Ascending aorta (tissue), 2 donors: ENCODE measurements at regions of chr6 and their contacts with region 1.

Region 1: DNA sequence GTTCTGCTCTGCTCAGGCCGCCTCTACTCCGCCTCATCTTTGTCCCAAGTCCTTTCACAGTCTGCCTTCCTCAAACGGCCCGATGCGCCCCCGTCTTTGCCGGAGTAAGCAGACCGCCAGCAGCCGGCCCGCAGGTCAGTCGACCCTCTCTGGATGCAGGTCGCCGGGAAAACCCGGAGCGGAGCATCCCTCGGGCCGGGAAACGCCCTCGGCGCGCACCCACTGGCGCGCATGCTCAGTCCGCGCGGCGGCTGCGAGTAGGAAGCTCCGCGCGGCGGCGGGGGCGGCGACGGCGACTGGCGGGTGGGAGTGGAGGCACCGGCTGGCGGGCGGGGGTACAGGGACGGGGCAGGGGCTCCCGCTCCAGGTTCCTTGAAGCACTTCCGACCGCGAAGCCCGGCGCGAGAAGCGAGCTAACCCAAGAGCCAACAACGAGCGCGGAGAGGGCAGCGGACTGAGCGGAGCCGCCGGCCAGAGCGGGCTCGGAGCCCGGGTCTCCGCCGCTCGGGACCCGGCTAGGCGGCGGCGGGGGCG is at the start of gene LRRC1:
- DNase-seq: peak; percentile 59 to 96
- H3K4me3 ChIP-seq: peak within 1 kb of the TSS; percentile 84 to 93
- H3K27ac ChIP-seq: peak within 1 kb of the TSS; percentile 74 to 91
- H3K4me1 ChIP-seq: peaks cover 3 to 5% of the 10 kb centered on the region in 2 donors
- H3K27me3 ChIP-seq: no peaks in the 10 kb centered on the region
- CTCF ChIP-seq: no peak
- total RNA-seq, gene LRRC1: 16.3 TPM

Region 2: GRCh38 chr6:53359072-53359842 is 435.5 kb before region 1 on chr6:
- intact Hi-C with region 1: loop called (anchors 10 kb)
- DNase-seq: peak; percentile 87 to 98
- H3K4me3 ChIP-seq: peak overlapping the region; percentile 53 to 80
- H3K27ac ChIP-seq: peak overlapping the region; percentile 78 to 94
- H3K4me1 ChIP-seq: peaks cover 0 to 4% of the 10 kb centered on the region in 2 donors
- H3K27me3 ChIP-seq: no peaks in the 10 kb centered on the region
- CTCF ChIP-seq: no peak

Region 3: DNA sequence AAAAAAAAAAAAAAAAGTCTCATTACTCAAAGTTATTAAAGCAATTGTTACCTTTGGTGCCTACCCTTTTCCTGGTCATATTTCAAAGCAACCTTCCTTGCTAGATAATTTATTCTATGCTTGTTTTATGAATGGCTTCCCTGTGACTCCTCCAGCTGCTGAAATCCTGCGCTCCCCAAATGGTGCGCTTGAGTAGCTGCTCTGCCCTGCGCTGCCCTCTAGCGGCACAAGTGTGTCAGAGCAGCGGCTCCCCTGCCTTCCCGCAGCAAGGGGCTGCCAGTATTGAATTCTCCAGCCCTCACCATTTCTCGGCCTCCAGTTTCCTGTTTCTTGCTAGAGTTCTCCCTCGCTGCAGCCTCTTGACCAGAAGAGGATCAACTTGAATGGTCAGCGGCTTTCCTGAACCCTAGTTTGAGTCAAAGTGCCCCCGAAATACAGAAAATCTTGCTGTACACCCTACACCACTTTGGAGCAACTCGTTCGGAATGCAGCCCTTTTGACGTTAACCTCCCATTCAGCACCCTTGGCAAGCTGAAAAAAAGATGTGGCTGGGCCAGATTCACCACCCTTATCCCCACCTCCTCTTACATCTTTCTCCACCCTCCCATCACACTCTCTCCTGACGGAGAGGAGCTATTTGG is 68.9 kb before region 1 on chr6:
- intact Hi-C with region 1: loop called (anchors 5 kb)
- DNase-seq: peak in 1 of 2 donors; percentile 84
- H3K4me3 ChIP-seq: no peak overlapping the region
- H3K27ac ChIP-seq: no peak overlapping the region
- H3K4me1 ChIP-seq: no peaks in the 10 kb centered on the region
- H3K27me3 ChIP-seq: no peaks in the 10 kb centered on the region
- CTCF ChIP-seq: peak; percentile 76 to 97 (median 95)

Region 4: GRCh38 chr6:53861517-53861916 is 66.7 kb after region 1 on chr6:
- intact Hi-C with region 1: loop called (anchors 2 kb)
- DNase-seq: no peak
- H3K4me3 ChIP-seq: no peak overlapping the region
- H3K27ac ChIP-seq: peak overlapping the region in 1 of 2 donors; percentile 26
- H3K4me1 ChIP-seq: peaks cover 0 to 13% of the 10 kb centered on the region in 2 donors
- H3K27me3 ChIP-seq: no peaks in the 10 kb centered on the region
- CTCF ChIP-seq: no peak

Region 5: GRCh38 chr6:53956068-53956711 is 161.4 kb after region 1 on chr6:
- intact Hi-C with region 1: loop called (anchors 1 kb)
- DNase-seq: peak in 1 of 2 donors; percentile 81
- H3K4me3 ChIP-seq: no peak overlapping the region
- H3K27ac ChIP-seq: no peak overlapping the region
- H3K4me1 ChIP-seq: no peaks in the 10 kb centered on the region
- H3K27me3 ChIP-seq: no peaks in the 10 kb centered on the region
- CTCF ChIP-seq: peak; percentile 62 to 89 (median 86)